ENCODE measurements at regions of chr12 and their contacts with region 1.

Region 1: GRCh38 chr12:32455607-32456071 is 56.3 kb downstream of the FGD4 start:
- DNase-seq: peak; percentile 78 to 90 (median 87)
- H3K4me3 ChIP-seq: peak overlapping the region in 6 of 7 experiments; percentile 44 to 88 (median 64)
- H3K27ac ChIP-seq: peak overlapping the region in 1 of 2 experiments; percentile 59
- H3K4me1 ChIP-seq: peaks cover 2 to 17% (median 8%) of the 10 kb centered on the region in 4 experiments
- H3K27me3 ChIP-seq: no peaks in the 10 kb centered on the region

Region 2: GRCh38 chr12:31859232-31859977 is 596.2 kb before region 1 on chr12:
- CTCF ChIA-PET with region 1: no interaction called
- POLR2A ChIA-PET with region 1: no interaction called
- DNase-seq: peak in 1 of 3 donors; percentile 35
- H3K4me3 ChIP-seq: no peak overlapping the region
- H3K27ac ChIP-seq: no peak overlapping the region
- H3K4me1 ChIP-seq: no peaks in the 10 kb centered on the region
- H3K27me3 ChIP-seq: no peaks in the 10 kb centered on the region

Region 3: GRCh38 chr12:32296567-32296966 is 159.1 kb before region 1 on chr12:
- CTCF ChIA-PET with region 1: no interaction called
- POLR2A ChIA-PET with region 1: no interaction called
- DNase-seq: no peak
- H3K4me3 ChIP-seq: no peak overlapping the region
- H3K27ac ChIP-seq: no peak overlapping the region
- H3K4me1 ChIP-seq: peaks cover 0 to 7% (median 4%) of the 10 kb centered on the region in 4 experiments
- H3K27me3 ChIP-seq: no peaks in the 10 kb centered on the region

Region 4: DNA sequence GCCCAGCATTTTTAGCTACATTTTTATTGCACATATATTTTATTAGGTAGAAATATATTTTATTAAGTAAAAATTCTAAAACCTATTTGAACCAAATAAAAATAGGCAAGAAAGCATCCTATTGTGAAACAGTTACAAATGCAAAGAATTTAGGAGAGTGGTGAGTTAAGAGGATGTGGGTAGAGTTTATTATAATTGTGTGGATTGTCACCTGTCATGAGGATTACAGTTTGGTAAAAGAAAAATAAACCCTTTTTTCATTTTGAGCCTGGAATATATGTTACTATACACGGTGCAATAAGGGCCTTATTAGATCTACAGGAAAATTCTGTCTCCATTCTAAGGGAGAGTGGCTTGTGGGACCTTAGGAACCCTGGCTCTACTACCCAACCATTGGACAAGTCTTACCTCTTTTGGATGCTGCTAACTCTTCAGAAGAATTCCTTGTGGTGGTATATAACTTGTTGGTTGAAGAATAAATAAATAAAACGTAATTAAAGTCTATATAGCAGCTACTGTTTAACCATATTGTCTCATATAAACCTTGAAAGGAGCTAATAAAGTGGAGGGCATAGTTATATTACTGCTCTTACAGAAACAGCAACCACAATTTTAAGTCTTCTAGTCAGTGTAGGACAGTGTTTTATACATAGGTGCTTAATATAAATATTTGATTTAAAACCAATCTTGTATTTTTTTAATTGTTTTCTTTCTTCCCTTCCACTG is 11.5 kb after region 1 on chr12:
- CTCF ChIA-PET with region 1: interaction called, 12 read pairs
- POLR2A ChIA-PET with region 1: interaction called, 3 read pairs
- DNase-seq: peak in 1 of 3 donors; percentile 29
- H3K4me3 ChIP-seq: no peak overlapping the region
- H3K27ac ChIP-seq: no peak overlapping the region
- H3K4me1 ChIP-seq: peaks cover 4 to 21% (median 11%) of the 10 kb centered on the region in 4 experiments
- H3K27me3 ChIP-seq: no peaks in the 10 kb centered on the region

Region 5: DNA sequence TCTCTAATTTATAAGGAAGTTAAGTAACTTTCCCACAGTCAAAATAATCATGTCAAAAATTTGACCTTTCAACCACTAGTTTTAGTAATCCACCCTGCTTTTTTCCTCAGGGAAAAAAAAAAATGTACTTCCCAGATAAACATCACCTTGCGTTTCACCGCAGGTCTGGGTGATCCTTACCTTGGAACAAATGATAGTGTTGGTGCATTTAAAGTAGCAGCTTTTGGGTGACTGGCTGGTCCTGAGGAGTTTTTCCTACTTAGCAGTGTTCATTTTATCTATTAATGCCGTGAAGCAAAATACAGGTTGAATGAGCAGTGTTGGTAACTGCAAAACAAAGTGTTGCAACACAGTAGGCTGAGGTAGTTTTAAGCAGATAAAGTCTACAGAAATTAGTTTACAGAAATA is 86.2 kb after region 1 on chr12:
- CTCF ChIA-PET with region 1: interaction called, 15 read pairs
- POLR2A ChIA-PET with region 1: no interaction called
- DNase-seq: no peak
- H3K4me3 ChIP-seq: no peak overlapping the region
- H3K27ac ChIP-seq: no peak overlapping the region
- H3K4me1 ChIP-seq: peaks cover 0 to 10% (median 2%) of the 10 kb centered on the region in 4 experiments
- H3K27me3 ChIP-seq: no peaks in the 10 kb centered on the region

Region 6: DNA sequence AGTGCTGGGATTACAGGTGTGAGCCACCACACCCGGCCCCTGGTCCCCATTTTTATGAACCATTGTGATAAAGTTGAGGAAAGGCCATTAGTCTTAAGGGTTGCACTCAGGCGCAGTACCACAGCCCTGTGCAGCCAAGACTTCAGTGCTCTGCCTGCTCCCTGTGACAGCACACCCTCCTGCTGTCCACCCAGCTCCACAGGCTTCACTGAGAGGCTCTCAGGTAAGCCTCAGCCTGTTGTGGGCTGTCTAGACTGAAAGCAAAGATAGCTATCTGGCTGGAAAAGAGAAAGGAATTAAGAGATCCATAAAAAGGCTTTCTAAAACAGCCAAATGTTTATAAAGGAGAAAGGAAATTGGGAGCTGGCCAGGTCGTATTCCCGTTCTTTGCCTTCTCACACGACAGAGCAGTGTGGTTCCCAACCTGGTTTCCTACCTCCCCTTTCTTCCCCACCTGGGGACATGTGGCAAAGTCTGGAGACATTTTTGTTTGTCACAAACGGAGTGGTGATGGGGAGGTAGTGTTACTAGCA is 204.3 kb after region 1 on chr12:
- CTCF ChIA-PET with region 1: interaction called, 27 read pairs
- POLR2A ChIA-PET with region 1: no interaction called
- DNase-seq: no peak
- H3K4me3 ChIP-seq: no peak overlapping the region
- H3K27ac ChIP-seq: no peak overlapping the region
- H3K4me1 ChIP-seq: no peaks in the 10 kb centered on the region
- H3K27me3 ChIP-seq: no peaks in the 10 kb centered on the region

Region 7: DNA sequence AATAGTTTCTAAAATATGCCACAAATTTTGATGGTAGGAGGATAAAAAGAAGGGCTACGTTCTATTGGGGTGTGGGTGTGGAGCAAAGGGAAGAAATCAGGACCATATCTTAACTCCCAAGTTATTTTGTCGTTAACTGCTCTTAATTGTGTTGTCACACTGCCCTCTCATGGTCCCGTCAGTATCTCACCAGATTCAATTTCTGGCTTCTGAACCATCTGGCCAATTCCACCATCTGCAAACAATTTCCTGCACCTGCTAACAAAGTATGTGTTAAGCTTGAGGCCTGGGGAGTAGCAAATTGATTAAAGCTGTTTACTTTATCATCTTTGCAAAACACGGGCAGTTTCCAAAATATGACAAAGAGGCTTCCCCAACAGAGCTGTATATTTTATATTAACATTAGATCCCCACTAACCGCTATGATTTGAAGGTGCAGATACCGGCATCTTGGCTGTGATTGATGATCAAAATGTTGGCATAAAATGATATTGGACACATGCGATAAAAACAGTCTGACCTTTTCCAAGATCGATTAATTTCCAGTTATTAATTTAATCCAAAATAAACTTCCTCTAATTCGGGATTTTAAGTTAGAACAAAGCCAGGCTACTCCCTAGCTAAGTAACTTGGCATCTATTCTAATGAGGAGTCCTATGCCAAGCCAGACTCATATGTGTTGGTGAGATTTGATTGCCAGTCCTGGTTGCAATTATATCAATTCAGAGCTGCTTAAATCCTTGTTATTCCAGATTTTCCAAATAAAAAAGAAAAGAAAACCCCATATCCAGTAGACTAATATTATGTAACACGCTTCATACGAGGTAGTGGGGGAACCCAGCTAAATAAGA is 216.5 kb after region 1 on chr12:
- CTCF ChIA-PET with region 1: interaction called, 96 read pairs
- POLR2A ChIA-PET with region 1: no interaction called
- DNase-seq: peak; percentile 74 to 93 (median 91)
- H3K4me3 ChIP-seq: no peak overlapping the region
- H3K27ac ChIP-seq: no peak overlapping the region
- H3K4me1 ChIP-seq: peaks cover 0 to 3% (median under 1%) of the 10 kb centered on the region in 4 experiments
- H3K27me3 ChIP-seq: no peaks in the 10 kb centered on the region